Mammary epithelial cell (primary cell): ENCODE measurements at regions of chr10 and their contacts with region 1.

Region 1: GRCh38 chr10:113521123-113521795 is 31.6 kb upstream of the HABP2 start:
- DNase-seq: peak; percentile 48
- H3K4me3 ChIP-seq: no peak overlapping the region
- H3K27ac ChIP-seq: no peak overlapping the region
- H3K4me1 ChIP-seq: no peaks in the 10 kb centered on the region
- H3K27me3 ChIP-seq: no peaks in the 10 kb centered on the region
- CTCF ChIP-seq: peak; percentile 100

Region 2: DNA sequence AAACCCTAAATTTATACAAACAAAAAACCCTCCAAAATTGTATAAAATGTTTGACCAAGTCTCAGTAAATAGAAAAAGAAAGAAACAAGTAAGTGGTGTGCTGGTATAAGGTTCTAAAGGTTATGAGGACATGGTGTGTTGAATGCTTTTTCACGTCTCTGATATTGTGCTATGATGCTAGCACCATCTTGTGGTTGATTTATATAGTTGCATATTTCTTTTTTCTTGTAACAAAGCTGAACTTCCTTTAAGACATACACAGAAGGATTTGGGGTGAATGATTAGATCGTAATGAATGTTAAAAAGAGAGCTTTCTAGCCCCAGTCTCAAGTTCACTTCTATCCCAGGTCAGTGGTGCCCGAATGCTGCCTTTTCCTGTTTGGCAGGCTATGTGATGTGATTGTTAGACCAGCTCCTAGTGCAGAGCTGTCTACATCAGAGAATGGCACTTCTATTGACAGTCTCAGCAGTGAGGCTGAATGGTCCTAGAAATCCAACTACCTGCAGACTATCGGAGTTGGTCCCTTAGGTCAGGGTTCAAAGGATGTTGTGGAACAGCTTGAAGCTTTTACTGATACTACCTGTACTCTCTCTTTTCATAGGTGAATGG is 1049.3 kb before region 1 on chr10:
- CTCF ChIA-PET with region 1: no interaction called
- dilution Hi-C with region 1: no loop called
- in situ Hi-C with region 1: no loop called
- intact Hi-C with region 1: loop called (anchors 1 kb)
- DNase-seq: peak; percentile 28
- H3K4me3 ChIP-seq: no peak overlapping the region
- H3K27ac ChIP-seq: no peak overlapping the region
- H3K4me1 ChIP-seq: no peaks in the 10 kb centered on the region
- H3K27me3 ChIP-seq: no peaks in the 10 kb centered on the region
- CTCF ChIP-seq: peak; percentile 67 to 68

Region 3: GRCh38 chr10:113216102-113216501 is 305.2 kb before region 1 on chr10:
- CTCF ChIA-PET with region 1: no interaction called
- dilution Hi-C with region 1: no loop called
- in situ Hi-C with region 1: no loop called
- intact Hi-C with region 1: loop called (anchors 1 kb)
- DNase-seq: peak; percentile 12
- H3K4me3 ChIP-seq: no peak overlapping the region
- H3K27ac ChIP-seq: no peak overlapping the region
- H3K4me1 ChIP-seq: no peaks in the 10 kb centered on the region
- H3K27me3 ChIP-seq: peaks cover 3% of the 10 kb centered on the region
- CTCF ChIP-seq: peak; percentile 33 to 62

Region 4: DNA sequence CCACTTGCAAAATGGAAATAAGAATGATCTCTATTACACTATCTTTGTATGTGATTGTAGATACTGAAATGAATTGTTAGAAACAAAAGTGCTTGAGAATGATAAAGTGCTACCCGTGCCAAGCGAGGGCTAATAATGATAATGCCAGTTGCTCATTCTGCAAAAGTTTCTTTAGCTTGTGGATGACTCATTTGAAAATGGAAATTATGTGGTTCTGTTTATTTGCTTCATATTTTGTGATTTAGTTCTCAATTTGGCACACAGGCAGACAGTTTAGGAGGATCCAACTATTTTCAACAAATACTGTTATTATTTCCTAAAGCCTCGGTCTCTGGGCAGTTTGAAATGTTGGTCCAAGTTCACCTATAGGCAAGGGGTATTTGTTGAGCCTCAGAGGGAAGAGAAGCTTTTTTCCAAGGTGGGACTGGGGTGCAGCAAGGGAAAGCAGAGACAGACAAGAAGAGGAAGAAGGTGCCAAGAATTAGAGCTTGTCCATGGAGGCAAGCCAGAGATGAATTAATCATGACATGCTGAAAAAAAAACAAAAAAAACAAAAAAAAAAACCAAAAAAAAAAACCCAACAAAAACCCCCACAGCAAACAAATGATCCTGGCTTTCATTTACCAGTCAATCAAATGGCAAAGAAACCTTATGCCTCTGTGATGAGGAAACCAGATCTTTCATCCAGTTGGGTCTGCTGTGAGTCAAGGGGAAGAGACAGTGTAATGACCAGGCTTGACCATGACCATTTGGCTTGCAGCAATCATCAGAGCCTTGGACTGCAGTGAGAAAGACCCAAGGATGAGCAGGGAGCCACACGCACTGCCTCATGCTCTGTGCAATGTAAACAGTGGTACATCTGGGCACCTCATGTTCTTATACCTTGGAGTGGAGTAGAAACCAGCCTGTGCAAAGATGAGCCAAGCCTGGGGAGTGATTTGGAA is 253.4 kb before region 1 on chr10:
- CTCF ChIA-PET with region 1: no interaction called
- dilution Hi-C with region 1: no loop called
- in situ Hi-C with region 1: no loop called
- intact Hi-C with region 1: no loop called
- DNase-seq: no peak
- H3K4me3 ChIP-seq: no peak overlapping the region
- H3K27ac ChIP-seq: no peak overlapping the region
- H3K4me1 ChIP-seq: no peaks in the 10 kb centered on the region
- H3K27me3 ChIP-seq: peaks cover 4% of the 10 kb centered on the region
- CTCF ChIP-seq: no peak

Region 5: GRCh38 chr10:113385021-113385999 is 135.9 kb before region 1 on chr10:
- CTCF ChIA-PET with region 1: no interaction called
- dilution Hi-C with region 1: no loop called
- in situ Hi-C with region 1: no loop called
- intact Hi-C with region 1: loop called (anchors 1 kb)
- DNase-seq: peak; percentile 68
- H3K4me3 ChIP-seq: no peak overlapping the region
- H3K27ac ChIP-seq: no peak overlapping the region
- H3K4me1 ChIP-seq: no peaks in the 10 kb centered on the region
- H3K27me3 ChIP-seq: peaks cover 5% of the 10 kb centered on the region
- CTCF ChIP-seq: peak; percentile 68 to 92

Region 6: DNA sequence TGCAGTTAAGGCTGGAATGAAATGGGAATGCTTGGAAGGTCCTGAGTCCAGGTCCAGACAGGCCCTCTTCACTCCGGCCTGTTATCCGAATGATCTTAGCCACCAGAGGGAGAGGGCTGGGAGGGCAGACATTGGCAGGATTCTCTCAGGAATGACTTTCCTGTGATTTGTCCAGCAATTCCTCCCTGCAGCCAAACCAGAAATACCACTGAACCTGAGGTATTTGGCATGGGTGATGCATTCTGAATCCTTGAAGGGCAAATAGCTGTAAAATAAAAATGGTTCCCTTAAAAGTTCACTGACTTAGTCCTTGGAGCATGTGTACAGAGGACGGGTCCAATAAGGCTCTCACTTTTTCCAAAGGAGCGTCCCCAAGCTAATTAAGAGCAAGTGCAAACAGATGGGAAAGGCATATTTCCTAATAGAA is 45.9 kb before region 1 on chr10:
- CTCF ChIA-PET with region 1: no interaction called
- dilution Hi-C with region 1: no loop called
- in situ Hi-C with region 1: no loop called
- intact Hi-C with region 1: loop called (anchors 2 kb)
- DNase-seq: peak; percentile 64
- H3K4me3 ChIP-seq: no peak overlapping the region
- H3K27ac ChIP-seq: no peak overlapping the region
- H3K4me1 ChIP-seq: peaks cover 30% of the 10 kb centered on the region
- H3K27me3 ChIP-seq: no peaks in the 10 kb centered on the region
- CTCF ChIP-seq: peak; percentile 21 to 46

Region 7: GRCh38 chr10:113585949-113586348 is 64.7 kb after region 1 on chr10:
- CTCF ChIA-PET with region 1: no interaction called
- dilution Hi-C with region 1: no loop called
- in situ Hi-C with region 1: no loop called
- intact Hi-C with region 1: no loop called
- DNase-seq: peak; percentile 34
- H3K4me3 ChIP-seq: no peak overlapping the region
- H3K27ac ChIP-seq: no peak overlapping the region
- H3K4me1 ChIP-seq: no peaks in the 10 kb centered on the region
- H3K27me3 ChIP-seq: no peaks in the 10 kb centered on the region
- CTCF ChIP-seq: no peak